Activated T-helper 2 cell treated with anti-CD3 and anti-CD28 coated beads, Interferon-gamma antibody, Interleukin-2, Interleukin-4, amounts not matched to agents 10 μg/mL and 5 μg/mL and 100 μg/mL, durations not matched to agents 14 hours and 24 hours and 36 hours (primary cell): ENCODE measurements at regions of chr6 and their contacts with region 1.

Region 1: GRCh38 chr6:16657768-16658167 is 103.5 kb downstream of the ATXN1 start:
- DNase-seq: no peak
- H3K4me3 Mint-ChIP-seq: peak overlapping the region; percentile 61
- H3K27ac Mint-ChIP-seq: peak overlapping the region; percentile 86
- H3K4me1 Mint-ChIP-seq: peaks cover 66% of the 10 kb centered on the region
- H3K27me3 Mint-ChIP-seq: no peaks in the 10 kb centered on the region

Region 2: GRCh38 chr6:16332175-16332542 is 325.6 kb before region 1 on chr6:
- intact Hi-C with region 1: loop called (anchors 2 kb)
- DNase-seq: peak; percentile 71
- H3K4me3 Mint-ChIP-seq: no peak overlapping the region
- H3K27ac Mint-ChIP-seq: no peak overlapping the region
- H3K4me1 Mint-ChIP-seq: peaks cover 11% of the 10 kb centered on the region
- H3K27me3 Mint-ChIP-seq: no peaks in the 10 kb centered on the region

Region 3: GRCh38 chr6:16481697-16482399 is 175.9 kb before region 1 on chr6:
- intact Hi-C with region 1: loop called (anchors 2 kb)
- DNase-seq: peak; percentile 71
- H3K4me3 Mint-ChIP-seq: peak overlapping the region; percentile 38
- H3K27ac Mint-ChIP-seq: peak overlapping the region; percentile 98
- H3K4me1 Mint-ChIP-seq: peaks cover 89% of the 10 kb centered on the region
- H3K27me3 Mint-ChIP-seq: no peaks in the 10 kb centered on the region

Region 4: DNA sequence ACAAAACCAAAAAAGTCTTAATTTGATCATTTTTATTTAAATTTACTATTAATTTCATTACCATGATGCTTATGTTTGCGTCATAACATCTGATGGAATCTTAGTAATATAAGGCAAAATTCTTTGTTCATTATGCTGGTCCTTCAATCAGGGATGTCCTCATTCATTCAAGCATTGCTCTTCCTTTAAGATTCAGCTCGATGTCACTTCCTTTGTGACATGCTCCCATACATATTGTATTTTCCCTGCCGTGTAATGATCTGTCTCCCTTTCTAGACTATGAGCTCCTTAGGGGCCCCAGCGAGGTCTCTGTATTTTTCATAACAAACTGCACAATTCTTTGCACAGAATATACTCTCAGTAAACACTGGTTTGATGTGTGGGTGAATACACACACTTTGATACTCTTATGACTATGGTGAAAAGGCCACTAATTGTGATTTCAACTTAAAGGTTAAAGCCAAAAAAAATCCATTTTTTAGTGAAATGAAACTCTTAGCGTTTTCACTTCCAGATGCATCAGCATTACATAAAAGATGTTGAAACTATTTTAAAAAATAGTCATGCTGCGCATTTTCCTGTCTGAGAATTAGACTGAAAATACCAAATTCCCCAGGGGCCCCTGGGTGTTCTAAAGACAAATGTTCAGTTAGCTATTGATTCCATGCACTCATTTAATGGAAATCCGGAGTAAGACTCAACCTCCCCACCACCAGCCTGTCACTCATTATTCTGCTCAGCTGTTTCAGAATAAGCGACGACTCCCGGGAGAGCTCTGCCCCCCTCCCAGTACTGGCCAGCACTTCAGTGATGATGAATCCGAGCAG is 66.2 kb before region 1 on chr6:
- intact Hi-C with region 1: loop called (anchors 5 kb)
- DNase-seq: no peak
- H3K4me3 Mint-ChIP-seq: no peak overlapping the region
- H3K27ac Mint-ChIP-seq: peak overlapping the region; percentile 61
- H3K4me1 Mint-ChIP-seq: peaks cover 21% of the 10 kb centered on the region
- H3K27me3 Mint-ChIP-seq: no peaks in the 10 kb centered on the region

Region 5: DNA sequence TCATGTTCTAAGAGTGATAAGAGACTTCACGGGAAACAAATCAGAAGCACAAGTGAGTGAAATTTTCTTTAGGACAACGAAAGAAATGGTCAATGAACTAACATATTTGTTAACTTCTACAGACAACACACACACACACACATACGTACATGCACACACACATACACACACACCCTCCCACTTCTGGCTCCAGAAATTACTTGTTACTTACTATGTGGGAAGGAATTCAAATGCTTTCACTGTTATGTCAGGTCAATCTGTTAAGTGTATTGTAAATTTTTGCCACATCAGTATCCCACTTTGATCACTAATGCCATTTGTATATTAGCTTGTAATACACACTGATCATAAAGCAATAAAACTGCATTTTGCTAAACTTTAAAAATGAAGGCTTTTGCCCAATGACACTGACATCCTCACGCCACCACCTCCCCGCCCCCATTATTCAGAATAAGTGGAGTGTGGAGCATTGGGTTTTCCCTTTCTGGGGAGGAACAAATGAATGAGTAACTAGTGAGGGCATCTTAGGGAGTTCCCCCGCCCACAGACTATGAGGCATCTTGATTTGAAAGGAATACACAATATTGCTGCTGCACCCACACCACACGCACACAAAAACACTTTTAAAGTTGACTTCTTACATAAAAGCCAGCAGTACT is 27.3 kb after region 1 on chr6:
- intact Hi-C with region 1: loop called (anchors 1 kb)
- DNase-seq: peak; percentile 49
- H3K4me3 Mint-ChIP-seq: no peak overlapping the region
- H3K27ac Mint-ChIP-seq: peak overlapping the region; percentile 86
- H3K4me1 Mint-ChIP-seq: peaks cover 83% of the 10 kb centered on the region
- H3K27me3 Mint-ChIP-seq: no peaks in the 10 kb centered on the region

Region 6: GRCh38 chr6:16731478-16732051 is 73.8 kb after region 1 on chr6:
- intact Hi-C with region 1: loop called (anchors 1 kb)
- DNase-seq: peak; percentile 48
- H3K4me3 Mint-ChIP-seq: peak overlapping the region; percentile 65
- H3K27ac Mint-ChIP-seq: peak overlapping the region; percentile 91
- H3K4me1 Mint-ChIP-seq: peaks cover 60% of the 10 kb centered on the region
- H3K27me3 Mint-ChIP-seq: no peaks in the 10 kb centered on the region